Mammary epithelial cell (primary cell): ENCODE measurements at regions of chr9 and their contacts with region 1.

Region 1: DNA sequence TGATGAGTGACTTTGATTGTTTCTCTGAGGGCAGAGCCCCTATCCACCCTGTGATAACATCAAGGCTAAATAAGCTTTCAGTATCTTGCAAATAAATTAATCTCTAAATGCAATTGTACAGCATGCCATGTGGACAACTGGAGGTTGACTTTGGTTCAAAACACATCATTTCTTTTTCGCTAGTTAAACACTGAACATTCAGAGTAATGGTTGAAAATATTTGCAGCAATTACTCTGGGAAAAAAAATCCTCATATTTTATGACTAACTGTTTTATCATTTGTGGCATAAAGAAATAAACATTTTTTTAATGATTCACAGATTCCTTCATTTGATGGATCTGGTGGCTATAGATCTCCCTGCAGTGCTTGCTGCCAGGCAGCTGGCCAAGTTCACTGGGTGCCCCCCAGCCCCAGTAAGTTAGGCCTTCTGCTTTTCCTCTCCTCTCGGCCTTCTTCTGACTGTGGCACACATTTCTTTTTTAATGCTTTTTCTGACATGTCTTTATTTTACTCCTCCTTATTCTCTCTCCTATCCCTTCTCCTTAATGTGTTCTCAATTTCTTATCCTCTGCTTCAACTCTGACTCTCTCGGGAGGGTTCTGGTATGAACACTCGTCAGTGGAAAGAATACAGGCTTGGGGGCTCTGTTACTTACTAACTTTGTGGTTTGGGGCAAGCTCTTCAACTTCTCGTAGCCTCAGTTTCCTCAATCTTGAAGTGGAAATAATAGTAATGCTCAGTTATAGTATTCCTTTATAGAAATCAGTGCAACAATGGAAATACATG is 69.6 kb downstream of the ADAMTSL1 start:
- DNase-seq: peak; percentile 58
- H3K4me3 ChIP-seq: no peak overlapping the region
- H3K27ac ChIP-seq: peak overlapping the region; percentile 56
- H3K4me1 ChIP-seq: peaks cover 39% of the 10 kb centered on the region
- H3K27me3 ChIP-seq: no peaks in the 10 kb centered on the region
- CTCF ChIP-seq: no peak

Region 2: GRCh38 chr9:18459958-18460584 is 83.5 kb before region 1 on chr9:
- CTCF ChIA-PET with region 1: no interaction called
- dilution Hi-C with region 1: no loop called
- in situ Hi-C with region 1: no loop called
- intact Hi-C with region 1: loop called (anchors 5 kb)
- DNase-seq: peak; percentile 92
- H3K4me3 ChIP-seq: no peak overlapping the region
- H3K27ac ChIP-seq: peak overlapping the region; percentile 89
- H3K4me1 ChIP-seq: peaks cover 54% of the 10 kb centered on the region
- H3K27me3 ChIP-seq: no peaks in the 10 kb centered on the region
- CTCF ChIP-seq: no peak

Region 3: GRCh38 chr9:18490635-18491370 is 52.8 kb before region 1 on chr9:
- CTCF ChIA-PET with region 1: no interaction called
- dilution Hi-C with region 1: no loop called
- in situ Hi-C with region 1: no loop called
- intact Hi-C with region 1: loop called (anchors 5 kb)
- DNase-seq: peak; percentile 96
- H3K4me3 ChIP-seq: peak overlapping the region in 2 of 3 experiments; percentile 6 to 16
- H3K27ac ChIP-seq: peak overlapping the region; percentile 93
- H3K4me1 ChIP-seq: peaks cover 56% of the 10 kb centered on the region
- H3K27me3 ChIP-seq: no peaks in the 10 kb centered on the region
- CTCF ChIP-seq: no peak

Region 4: GRCh38 chr9:18507151-18507550 is 36.4 kb before region 1 on chr9:
- CTCF ChIA-PET with region 1: no interaction called
- dilution Hi-C with region 1: no loop called
- in situ Hi-C with region 1: no loop called
- intact Hi-C with region 1: loop called (anchors 2 kb)
- DNase-seq: no peak
- H3K4me3 ChIP-seq: no peak overlapping the region
- H3K27ac ChIP-seq: no peak overlapping the region
- H3K4me1 ChIP-seq: no peaks in the 10 kb centered on the region
- H3K27me3 ChIP-seq: no peaks in the 10 kb centered on the region
- CTCF ChIP-seq: no peak